AG04449 (cell line): ENCODE measurements at regions of chr1 and their contacts with region 1.

Region 1: GRCh38 chr1:103461161-103462105 is 64.1 kb upstream of the RNPC3 start:
- DNase-seq: no peak
- H3K4me3 ChIP-seq: no peak overlapping the region
- CTCF ChIP-seq: no peak

Region 2: DNA sequence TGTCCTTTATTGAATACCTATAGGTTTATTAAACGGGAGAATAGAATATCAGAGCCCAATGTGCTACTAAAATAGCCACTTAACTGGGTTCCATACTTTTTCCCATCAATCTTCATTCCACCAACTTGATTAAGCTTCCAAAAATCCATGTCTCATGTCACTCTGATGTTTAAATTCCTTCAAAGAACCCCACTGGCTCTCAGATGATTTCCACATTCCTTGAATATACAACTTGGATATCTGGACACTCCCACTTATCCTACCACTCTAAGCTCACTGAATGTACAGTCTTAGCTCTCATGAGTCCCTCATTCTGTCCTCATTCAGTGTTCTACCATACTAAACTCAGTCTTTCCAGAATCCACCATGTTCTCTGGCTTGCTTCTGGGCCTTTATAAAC is 374.2 kb before region 1 on chr1:
- CTCF ChIA-PET with region 1: interaction called, 10 read pairs
- POLR2A ChIA-PET with region 1: no interaction called
- DNase-seq: no peak
- H3K4me3 ChIP-seq: no peak overlapping the region
- CTCF ChIP-seq: no peak

Region 3: GRCh38 chr1:103106426-103107341 is 354.7 kb before region 1 on chr1:
- CTCF ChIA-PET with region 1: interaction called, 53 read pairs
- POLR2A ChIA-PET with region 1: interaction called, 14 read pairs
- DNase-seq: no peak
- H3K4me3 ChIP-seq: peak overlapping the region; percentile 73
- CTCF ChIP-seq: peak; percentile 11

Region 4: GRCh38 chr1:103348136-103348535 is 113.3 kb before region 1 on chr1:
- CTCF ChIA-PET with region 1: no interaction called
- POLR2A ChIA-PET with region 1: no interaction called
- DNase-seq: no peak
- H3K4me3 ChIP-seq: no peak overlapping the region
- CTCF ChIP-seq: no peak

Region 5: DNA sequence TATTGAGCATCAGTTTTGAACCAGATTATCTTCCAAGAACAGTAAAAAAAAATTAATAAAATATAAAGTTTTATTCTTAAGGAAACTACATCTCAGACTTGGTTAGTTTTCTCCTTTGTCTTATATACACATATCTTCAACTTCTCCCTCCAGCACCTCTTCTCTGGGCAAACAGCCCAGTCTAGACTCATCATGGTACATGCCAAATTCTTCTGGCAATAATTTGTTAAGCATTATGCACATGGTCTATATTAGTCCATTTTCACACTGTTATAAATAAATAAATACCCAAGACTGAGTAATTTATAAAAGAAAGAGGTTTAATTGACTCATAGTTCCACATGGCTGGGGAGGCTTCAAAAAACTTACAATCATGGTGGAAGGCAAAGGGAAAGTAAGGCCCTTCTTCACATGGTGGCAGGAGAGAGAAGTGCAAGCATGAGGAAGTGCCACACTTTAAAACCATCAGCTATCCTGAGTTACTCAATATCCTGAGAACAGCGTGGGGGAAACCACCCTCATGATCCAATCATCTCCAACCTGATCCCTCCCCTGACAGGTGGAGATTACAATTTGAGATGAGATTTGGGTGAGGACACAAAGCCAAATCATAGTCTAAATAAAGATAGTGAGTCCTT is 44.6 kb before region 1 on chr1:
- CTCF ChIA-PET with region 1: no interaction called
- POLR2A ChIA-PET with region 1: no interaction called
- DNase-seq: no peak
- H3K4me3 ChIP-seq: no peak overlapping the region
- CTCF ChIP-seq: no peak

Region 6: DNA sequence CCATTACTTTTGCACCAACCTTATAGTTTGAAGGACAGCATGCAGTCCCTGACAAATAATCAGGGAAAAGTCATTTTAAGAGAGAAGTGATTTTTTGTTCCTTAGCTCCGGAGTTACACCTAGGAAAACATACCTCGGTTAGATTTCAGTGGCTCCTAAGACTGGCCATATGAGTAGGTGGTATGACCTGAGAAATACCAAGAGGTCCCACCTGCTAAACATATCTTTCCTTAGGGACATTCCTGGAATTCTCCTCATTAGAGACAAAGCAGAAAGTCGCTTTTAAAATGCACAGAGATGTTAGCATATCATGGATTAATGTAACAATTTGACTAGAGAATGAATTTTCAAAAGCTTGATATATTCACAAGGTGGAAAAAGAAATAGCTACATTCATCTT is 20.1 kb before region 1 on chr1:
- CTCF ChIA-PET with region 1: no interaction called
- POLR2A ChIA-PET with region 1: no interaction called
- DNase-seq: no peak
- H3K4me3 ChIP-seq: no peak overlapping the region
- CTCF ChIP-seq: no peak